ENCODE measurements at regions of chr2 and their contacts with region 1.

Region 1: GRCh38 chr2:54704688-54705605 is 18.5 kb upstream of the EML6 start:
- DNase-seq: no peak
- ATAC-seq: peak; percentile 44 to 91 (median 74)
- H3K4me3 ChIP-seq: no peak overlapping the region
- H3K27ac ChIP-seq: no peak overlapping the region
- H3K4me1 ChIP-seq: no peaks in the 10 kb centered on the region
- H3K27me3 ChIP-seq: peaks cover 0 to 9% (median 4%) of the 10 kb centered on the region in 3 donors
- CTCF ChIP-seq: peak; percentile 62

Region 2: GRCh38 chr2:53840580-53840979 is 864.4 kb before region 1 on chr2:
- intact Hi-C with region 1: no loop called
- DNase-seq: no peak
- ATAC-seq: no peak
- H3K4me3 ChIP-seq: no peak overlapping the region
- H3K27ac ChIP-seq: no peak overlapping the region
- H3K4me1 ChIP-seq: peaks cover 8% of the 10 kb centered on the region
- H3K27me3 ChIP-seq: no peaks in the 10 kb centered on the region
- CTCF ChIP-seq: no peak

Region 3: GRCh38 chr2:54161660-54162424 is 543.1 kb before region 1 on chr2:
- intact Hi-C with region 1: loop called in 1 of 2 experiments (anchors 5 kb)
- DNase-seq: no peak
- ATAC-seq: no peak
- H3K4me3 ChIP-seq: no peak overlapping the region
- H3K27ac ChIP-seq: no peak overlapping the region
- H3K4me1 ChIP-seq: no peaks in the 10 kb centered on the region
- H3K27me3 ChIP-seq: no peaks in the 10 kb centered on the region
- CTCF ChIP-seq: no peak

Region 4: DNA sequence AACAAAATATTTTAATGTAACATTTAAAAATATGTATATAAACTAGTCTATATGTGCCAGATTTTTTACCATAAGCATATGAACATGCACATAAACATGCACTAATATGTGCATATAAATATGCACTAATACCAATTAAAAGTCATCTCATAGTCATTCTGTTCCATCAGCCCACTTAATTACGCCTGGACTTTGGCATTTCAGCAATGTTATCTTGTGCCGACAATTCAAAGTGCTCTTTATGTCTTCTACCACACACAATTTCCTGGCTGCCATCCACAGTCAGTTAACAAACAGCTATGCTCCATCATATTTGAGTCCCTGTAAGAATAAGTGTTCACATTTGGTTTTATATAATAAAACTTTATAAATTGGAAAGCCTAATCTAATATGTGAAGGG is 356.3 kb before region 1 on chr2:
- intact Hi-C with region 1: no loop called
- DNase-seq: no peak
- ATAC-seq: no peak
- H3K4me3 ChIP-seq: no peak overlapping the region
- H3K27ac ChIP-seq: no peak overlapping the region
- H3K4me1 ChIP-seq: no peaks in the 10 kb centered on the region
- H3K27me3 ChIP-seq: no peaks in the 10 kb centered on the region
- CTCF ChIP-seq: no peak

Region 5: DNA sequence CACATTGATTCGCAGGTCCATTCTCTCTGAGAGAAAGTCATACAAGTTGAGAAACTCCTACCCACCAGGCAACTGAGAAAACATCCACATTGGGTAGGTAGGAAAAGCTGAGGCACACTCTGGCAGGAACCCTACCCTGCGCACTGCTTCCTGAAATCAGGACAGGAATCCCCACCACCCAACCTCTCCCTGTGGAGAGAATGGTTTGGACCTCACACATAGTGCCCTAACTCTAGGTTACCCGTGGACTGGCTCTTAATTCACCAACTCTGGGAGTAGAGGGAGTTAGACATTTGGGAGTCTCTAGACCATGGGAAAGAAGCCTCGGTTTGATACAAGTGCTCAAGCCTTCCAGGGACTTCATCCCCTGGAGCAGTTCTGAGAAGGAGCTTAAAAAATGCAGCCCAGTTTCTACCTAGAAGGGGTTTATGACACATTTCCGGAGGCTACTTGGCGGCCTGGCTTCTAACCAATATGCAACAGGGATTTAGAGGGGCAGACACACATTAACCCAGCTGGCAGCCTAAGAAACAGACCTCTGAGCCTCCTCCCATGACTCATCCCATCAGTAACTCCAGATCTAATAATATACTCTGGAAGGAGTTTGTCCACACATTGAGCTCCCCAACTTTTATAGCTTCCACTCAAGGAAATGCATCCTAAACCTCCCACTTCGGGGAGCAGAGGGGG is 155.2 kb after region 1 on chr2:
- intact Hi-C with region 1: no loop called
- DNase-seq: no peak
- ATAC-seq: peak; percentile 52 to 88 (median 84)
- H3K4me3 ChIP-seq: no peak overlapping the region
- H3K27ac ChIP-seq: no peak overlapping the region
- H3K4me1 ChIP-seq: no peaks in the 10 kb centered on the region
- H3K27me3 ChIP-seq: no peaks in the 10 kb centered on the region
- CTCF ChIP-seq: no peak

Region 6: GRCh38 chr2:55073000-55073983 is 368.3 kb after region 1 on chr2:
- intact Hi-C with region 1: no loop called
- DNase-seq: no peak
- ATAC-seq: no peak
- H3K4me3 ChIP-seq: no peak overlapping the region
- H3K27ac ChIP-seq: no peak overlapping the region
- H3K4me1 ChIP-seq: peaks cover 5% of the 10 kb centered on the region
- H3K27me3 ChIP-seq: no peaks in the 10 kb centered on the region
- CTCF ChIP-seq: no peak